Motor neuron (in vitro differentiated cells): ENCODE measurements at regions of chr14 and their contacts with region 1.

Region 1: GRCh38 chr14:74362361-74362915 is 14.2 kb downstream of the VRTN start:
- ATAC-seq: peak; percentile 74 to 94 (median 86)
- H3K4me3 ChIP-seq: no peak overlapping the region
- H3K27ac ChIP-seq: no peak overlapping the region
- H3K4me1 ChIP-seq: peaks cover 0 to 5% of the 10 kb centered on the region in 2 donors

Region 2: DNA sequence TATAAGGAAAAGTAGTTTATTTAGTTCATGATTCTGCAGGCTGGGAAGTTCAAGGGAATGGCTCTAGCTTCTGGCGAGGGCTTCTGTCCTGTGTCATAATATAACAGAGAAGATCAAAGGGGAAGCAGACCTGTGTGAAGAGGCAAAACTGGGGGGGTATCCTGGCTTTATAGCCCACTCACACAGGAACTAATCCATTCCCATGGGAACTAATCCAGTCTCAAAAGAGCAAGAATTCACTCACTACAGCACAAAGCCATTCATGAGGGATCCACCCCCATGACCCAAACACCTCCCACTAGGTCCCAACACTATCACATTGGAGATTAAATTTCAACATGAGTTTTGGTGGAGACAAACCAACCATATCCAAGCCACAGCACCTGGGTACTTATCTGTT is 285.0 kb before region 1 on chr14:
- in situ Hi-C with region 1: no loop called
- ATAC-seq: no peak
- H3K4me3 ChIP-seq: no peak overlapping the region
- H3K27ac ChIP-seq: no peak overlapping the region
- H3K4me1 ChIP-seq: no peaks in the 10 kb centered on the region

Region 3: GRCh38 chr14:74459289-74459946 is 97.0 kb after region 1 on chr14:
- in situ Hi-C with region 1: loop called in 1 of 9 experiments (anchors 25 kb)
- ATAC-seq: peak; percentile 51 to 100 (median 81)
- H3K4me3 ChIP-seq: no peak overlapping the region
- H3K27ac ChIP-seq: no peak overlapping the region
- H3K4me1 ChIP-seq: peaks cover 5 to 18% of the 10 kb centered on the region in 2 donors

Region 4: DNA sequence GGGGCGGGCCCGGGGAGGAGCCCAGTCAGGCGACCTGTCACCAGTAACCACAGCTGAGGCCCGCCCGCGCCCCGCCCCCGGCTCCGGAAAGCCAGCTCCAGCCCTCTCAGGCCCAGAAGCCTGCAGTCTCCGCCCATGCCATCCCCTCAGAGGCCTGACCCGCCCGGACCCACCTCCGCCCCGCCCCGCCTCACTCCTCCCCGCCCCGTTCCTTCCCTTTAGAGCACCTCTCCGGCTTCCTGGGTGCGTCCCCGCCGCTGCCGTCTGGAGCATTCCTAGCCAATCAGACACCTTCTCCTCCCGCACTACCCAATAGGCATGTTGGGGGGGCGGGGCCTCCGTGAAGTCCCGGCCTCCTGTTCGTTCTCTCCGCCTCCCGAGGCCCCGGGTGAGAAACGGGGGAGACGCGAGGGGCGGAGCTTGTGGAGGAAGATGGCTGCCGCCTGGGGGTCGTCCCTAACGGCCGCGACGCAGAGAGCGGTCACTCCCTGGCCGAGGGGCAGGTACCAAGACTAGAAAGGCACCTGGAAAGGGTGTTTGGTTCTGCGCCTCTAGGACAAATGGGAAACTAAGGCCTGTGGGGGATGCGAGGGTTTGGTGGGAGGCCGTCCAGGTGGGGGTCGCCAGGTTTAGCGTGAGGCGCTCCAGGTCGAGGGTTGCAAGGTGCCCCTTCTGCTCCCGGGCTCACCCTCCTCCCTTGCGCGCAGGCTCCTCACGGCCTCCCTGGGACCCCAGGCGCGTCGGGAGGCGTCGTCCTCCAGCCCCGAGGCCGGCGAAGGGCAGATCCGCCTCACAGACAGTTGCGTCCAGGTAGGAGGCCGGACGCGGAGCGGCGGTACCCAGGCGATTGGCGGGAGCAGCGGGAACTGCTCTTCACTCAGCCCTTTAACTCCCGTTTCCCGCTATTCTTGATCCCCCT is 131.2 kb after region 1 on chr14 and contains the start of gene ISCA2:
- in situ Hi-C with region 1: loop called in 8 of 9 experiments (anchors 10 to 25 kb)
- ATAC-seq: peak; percentile 88 to 94 (median 93)
- H3K4me3 ChIP-seq: peak within 1 kb of the TSS; percentile 78 to 95 (median 81)
- H3K27ac ChIP-seq: peak within 1 kb of the TSS; percentile 68 to 89
- H3K4me1 ChIP-seq: peaks cover 4 to 15% of the 10 kb centered on the region in 2 donors
- total RNA-seq, gene ISCA2: 14.9 to 30.4 (median 18.9) TPM